PC-3 (cell line): ENCODE measurements at regions of chr2 and their contacts with region 1.

Region 1: GRCh38 chr2:23404426-23404825 is 19.4 kb downstream of the KLHL29 start:
- DNase-seq: peak; percentile 78
- ATAC-seq: peak; percentile 96
- H3K4me3 ChIP-seq: peak overlapping the region; percentile 60
- H3K27ac ChIP-seq: peak overlapping the region; percentile 67
- H3K4me1 ChIP-seq: peaks cover 21% of the 10 kb centered on the region
- H3K27me3 ChIP-seq: no peaks in the 10 kb centered on the region
- CTCF ChIP-seq: peak; percentile 46

Region 2: DNA sequence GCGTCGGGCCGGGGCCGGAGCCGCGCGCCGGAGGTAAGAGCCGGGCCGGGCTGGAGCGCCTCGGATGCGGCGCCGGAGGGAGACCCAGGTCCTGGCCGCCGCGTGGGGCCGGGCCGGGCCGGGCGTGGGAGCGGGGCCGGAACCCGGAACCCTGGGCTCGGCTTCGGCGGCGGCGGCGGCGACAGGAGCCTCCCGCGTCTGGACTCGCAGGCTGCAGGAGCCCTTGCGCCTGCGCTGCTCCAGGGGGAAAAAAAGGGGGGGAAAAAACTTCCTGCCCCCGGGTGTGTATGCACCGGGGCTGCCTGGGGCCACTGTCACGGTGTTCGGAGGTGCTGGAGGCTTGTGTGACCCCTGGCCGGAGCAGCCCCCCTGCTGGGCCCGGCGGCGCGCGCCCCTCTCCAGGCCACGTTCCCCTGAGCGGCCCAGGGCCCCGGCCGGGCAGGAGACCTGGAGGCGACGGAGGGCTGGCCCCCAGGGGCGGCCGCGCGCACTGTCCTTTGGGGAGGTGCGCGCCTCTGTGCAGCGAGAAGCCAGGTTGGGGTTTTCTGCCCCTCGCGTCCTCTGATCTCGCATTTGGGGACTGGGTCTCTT is 18.6 kb before region 1 on chr2:
- CTCF ChIA-PET with region 1: no interaction called
- POLR2A ChIA-PET with region 1: no interaction called
- intact Hi-C with region 1: loop called (anchors 2 kb)
- DNase-seq: no peak
- ATAC-seq: peak; percentile 30
- H3K4me3 ChIP-seq: peak overlapping the region; percentile 83
- H3K27ac ChIP-seq: no peak overlapping the region
- H3K4me1 ChIP-seq: peaks cover 11% of the 10 kb centered on the region
- H3K27me3 ChIP-seq: peaks cover 17% of the 10 kb centered on the region
- CTCF ChIP-seq: no peak

Region 3: GRCh38 chr2:23452853-23453420 is 48.5 kb after region 1 on chr2:
- CTCF ChIA-PET with region 1: interaction called, 6 read pairs
- POLR2A ChIA-PET with region 1: interaction called, 6 read pairs
- intact Hi-C with region 1: loop called (anchors 2 kb)
- DNase-seq: no peak
- ATAC-seq: peak; percentile 69
- H3K4me3 ChIP-seq: no peak overlapping the region
- H3K27ac ChIP-seq: no peak overlapping the region
- H3K4me1 ChIP-seq: peaks cover 10% of the 10 kb centered on the region
- H3K27me3 ChIP-seq: no peaks in the 10 kb centered on the region
- CTCF ChIP-seq: no peak

Region 4: DNA sequence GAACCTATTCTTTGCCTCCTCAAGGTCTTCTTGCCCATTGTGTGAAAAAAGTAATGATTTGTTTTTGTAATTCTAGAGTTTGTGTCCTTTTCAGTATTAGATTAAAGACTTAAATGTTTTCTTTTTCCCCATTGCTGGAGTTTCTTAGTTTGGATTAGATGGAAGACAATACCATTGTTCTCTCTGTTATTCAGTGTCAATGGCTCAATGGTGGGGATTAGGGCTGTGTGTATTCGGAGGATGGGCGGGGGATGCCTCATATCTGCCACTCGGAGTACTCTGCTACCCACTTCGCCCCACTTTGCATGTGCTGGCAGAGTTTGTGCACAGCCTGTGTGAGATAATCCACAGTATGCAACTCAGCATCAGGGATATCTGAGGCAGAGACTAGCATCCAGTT is 70.6 kb after region 1 on chr2:
- CTCF ChIA-PET with region 1: no interaction called
- POLR2A ChIA-PET with region 1: no interaction called
- intact Hi-C with region 1: no loop called
- DNase-seq: no peak
- ATAC-seq: no peak
- H3K4me3 ChIP-seq: no peak overlapping the region
- H3K27ac ChIP-seq: no peak overlapping the region
- H3K4me1 ChIP-seq: no peaks in the 10 kb centered on the region
- H3K27me3 ChIP-seq: no peaks in the 10 kb centered on the region
- CTCF ChIP-seq: no peak